Activated T-helper 1 cell treated with anti-CD3 and anti-CD28 coated beads, Interleukin-12 subunit alpha, Interleukin-12 subunit beta, Interleukin-2, Interleukin-4 antibody, amounts not matched to agents 30 ng/mL and 10 ng/mL and 1 ng/mL, durations not matched to agents 14 hours and 24 hours and 36 hours (primary cell): ENCODE measurements at regions of chr4 and their contacts with region 1.

Region 1: GRCh38 chr4:88456757-88457306 is at the start of gene HERC5:
- DNase-seq: peak; percentile 92
- H3K4me3 Mint-ChIP-seq: peak within 1 kb of the TSS; percentile 99
- H3K27ac Mint-ChIP-seq: peak within 1 kb of the TSS; percentile 100
- H3K4me1 Mint-ChIP-seq: peaks cover 47% of the 10 kb centered on the region
- H3K27me3 Mint-ChIP-seq: no peaks in the 10 kb centered on the region
- total RNA-seq, gene HERC5: 19.1 and 21.2 TPM in 2 replicates

Region 2: GRCh38 chr4:87006676-87007527 is 1449.9 kb before region 1 on chr4:
- intact Hi-C with region 1: loop called (anchors 2 kb)
- DNase-seq: peak; percentile 87
- H3K4me3 Mint-ChIP-seq: peak overlapping the region; percentile 98
- H3K27ac Mint-ChIP-seq: peak overlapping the region; percentile 96
- H3K4me1 Mint-ChIP-seq: peaks cover 52% of the 10 kb centered on the region
- H3K27me3 Mint-ChIP-seq: no peaks in the 10 kb centered on the region

Region 3: GRCh38 chr4:87901422-87901992 is 555.3 kb before region 1 on chr4:
- intact Hi-C with region 1: no loop called
- DNase-seq: no peak
- H3K4me3 Mint-ChIP-seq: no peak overlapping the region
- H3K27ac Mint-ChIP-seq: no peak overlapping the region
- H3K4me1 Mint-ChIP-seq: peaks cover 11% of the 10 kb centered on the region
- H3K27me3 Mint-ChIP-seq: peaks cover 27% of the 10 kb centered on the region

Region 4: GRCh38 chr4:88158489-88159243 is 298.2 kb before region 1 on chr4 and contains the start of gene ABCG2:
- intact Hi-C with region 1: loop called (anchors 2 kb)
- DNase-seq: peak; percentile 46
- H3K4me3 Mint-ChIP-seq: peak within 1 kb of the TSS; percentile 80
- H3K27ac Mint-ChIP-seq: peak within 1 kb of the TSS; percentile 16
- H3K4me1 Mint-ChIP-seq: peaks cover 17% of the 10 kb centered on the region
- H3K27me3 Mint-ChIP-seq: peaks cover 18% of the 10 kb centered on the region
- total RNA-seq, gene ABCG2: 0.34 TPM in 2 replicates

Region 5: GRCh38 chr4:88378691-88379559 is 77.9 kb before region 1 on chr4 and contains the start of gene HERC6:
- intact Hi-C with region 1: loop called (anchors 1 kb)
- DNase-seq: peak; percentile 80
- H3K4me3 Mint-ChIP-seq: peak within 1 kb of the TSS; percentile 89
- H3K27ac Mint-ChIP-seq: peak within 1 kb of the TSS; percentile 81
- H3K4me1 Mint-ChIP-seq: peaks cover 47% of the 10 kb centered on the region
- H3K27me3 Mint-ChIP-seq: no peaks in the 10 kb centered on the region
- total RNA-seq, gene HERC6: 6.0 and 9.1 TPM in 2 replicates

Region 6: GRCh38 chr4:88523325-88524129 is 66.7 kb after region 1 on chr4 and contains the start of gene PYURF:
- intact Hi-C with region 1: loop called (anchors 1 kb)
- DNase-seq: peak; percentile 79
- H3K4me3 Mint-ChIP-seq: peak within 1 kb of the TSS; percentile 99
- H3K27ac Mint-ChIP-seq: peak within 1 kb of the TSS; percentile 97
- H3K4me1 Mint-ChIP-seq: peaks cover 60% of the 10 kb centered on the region
- H3K27me3 Mint-ChIP-seq: peaks cover 2% of the 10 kb centered on the region
- total RNA-seq, gene PYURF: 55.9 and 61.5 TPM in 2 replicates

Region 7: GRCh38 chr4:88672987-88673386 is 216.2 kb after region 1 on chr4:
- intact Hi-C with region 1: no loop called
- DNase-seq: no peak
- H3K4me3 Mint-ChIP-seq: no peak overlapping the region
- H3K27ac Mint-ChIP-seq: no peak overlapping the region
- H3K4me1 Mint-ChIP-seq: no peaks in the 10 kb centered on the region
- H3K27me3 Mint-ChIP-seq: no peaks in the 10 kb centered on the region

Region 8: DNA sequence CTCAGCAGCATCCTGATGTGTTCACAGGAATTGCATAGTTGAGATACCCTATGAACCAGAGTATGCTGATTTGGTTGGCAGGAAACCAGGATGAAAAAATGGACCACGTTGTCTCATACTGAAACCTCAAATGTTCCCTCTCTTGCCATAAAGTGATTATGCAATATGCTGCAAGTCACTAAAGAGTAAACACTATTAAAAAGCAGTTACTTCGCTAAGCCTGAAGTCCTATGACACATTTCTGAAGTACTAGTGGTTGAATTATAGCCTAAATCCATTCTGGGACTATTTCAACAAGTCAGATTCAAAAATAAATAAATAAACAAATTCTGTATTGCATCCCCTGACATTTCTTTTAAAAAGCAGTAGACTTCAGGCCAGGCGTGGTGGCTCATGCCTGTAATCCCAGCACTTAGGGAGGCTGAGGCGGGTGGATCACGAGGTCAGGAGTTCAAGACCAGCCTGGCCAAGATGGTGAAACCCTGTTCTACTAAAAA is 346.8 kb after region 1 on chr4:
- intact Hi-C with region 1: loop called (anchors 1 kb)
- DNase-seq: peak; percentile 17
- H3K4me3 Mint-ChIP-seq: no peak overlapping the region
- H3K27ac Mint-ChIP-seq: no peak overlapping the region
- H3K4me1 Mint-ChIP-seq: peaks cover 13% of the 10 kb centered on the region
- H3K27me3 Mint-ChIP-seq: peaks cover 16% of the 10 kb centered on the region

Region 9: DNA sequence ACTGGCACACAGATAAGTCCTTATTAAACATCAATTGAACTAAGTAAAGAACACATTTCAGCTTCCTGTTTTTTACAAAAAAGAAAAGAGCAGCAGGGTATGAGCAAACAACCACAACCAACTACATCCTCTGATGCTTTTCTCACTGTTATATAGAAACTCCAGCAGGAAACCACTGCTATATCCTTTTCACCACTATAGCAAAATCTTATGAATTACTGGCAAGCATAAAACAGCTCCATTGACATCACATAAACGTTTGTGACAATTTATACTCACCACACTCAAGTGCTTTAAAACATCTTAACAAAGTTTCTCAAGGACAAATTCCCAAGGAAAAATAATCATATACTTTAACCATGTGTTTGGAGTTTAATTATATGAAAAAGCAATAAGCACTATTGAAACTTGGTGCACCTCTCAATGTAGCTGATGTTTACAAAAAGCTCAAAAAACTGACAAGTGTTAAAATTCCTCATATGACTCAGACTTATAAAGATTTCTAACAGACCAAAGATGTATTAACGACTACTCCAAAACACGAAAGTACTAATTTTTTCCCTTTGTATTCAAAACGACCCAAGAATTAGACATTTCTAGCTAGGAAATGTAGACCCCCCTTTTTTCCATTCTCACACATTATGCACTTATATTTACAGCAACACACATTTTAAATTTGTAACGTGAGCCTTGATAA is 837.9 kb after region 1 on chr4:
- intact Hi-C with region 1: loop called (anchors 10 kb)
- DNase-seq: no peak
- H3K4me3 Mint-ChIP-seq: peak overlapping the region; percentile 77
- H3K27ac Mint-ChIP-seq: peak overlapping the region; percentile 99
- H3K4me1 Mint-ChIP-seq: peaks cover 89% of the 10 kb centered on the region
- H3K27me3 Mint-ChIP-seq: no peaks in the 10 kb centered on the region